Ovary (tissue), 10 donors: ENCODE measurements at regions of chr21 and their contacts with region 1.

Region 1: DNA sequence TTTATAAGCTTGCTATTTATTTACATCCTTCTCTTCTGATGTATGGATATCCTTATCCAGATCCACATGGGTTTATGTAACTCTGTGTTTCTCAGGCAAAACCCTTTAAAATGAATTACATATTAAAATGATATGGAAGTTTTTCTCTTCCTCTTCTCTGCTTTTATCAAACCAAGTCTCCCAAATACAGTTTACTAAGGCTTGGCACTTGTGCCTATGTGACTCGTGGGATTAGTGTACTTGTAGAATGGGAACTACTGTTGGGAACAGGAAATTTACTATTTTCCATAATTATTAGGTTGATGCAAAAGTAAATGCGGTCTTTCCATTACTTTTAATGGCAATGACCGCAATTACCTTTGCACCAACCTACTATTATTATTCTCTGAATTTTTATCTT is 14.8 kb downstream of the SIM2 start:
- DNase-seq: no peak
- H3K4me3 ChIP-seq: no peak overlapping the region
- H3K27ac ChIP-seq: no peak overlapping the region
- H3K4me1 ChIP-seq: no peaks in the 10 kb centered on the region
- H3K27me3 ChIP-seq: peaks cover 3% of the 10 kb centered on the region
- CTCF ChIP-seq: no peak
- EP300 ChIP-seq: no peak
- POLR2A ChIP-seq: no peak

Region 2: GRCh38 chr21:36695671-36696389 is 17.9 kb before region 1 on chr21:
- intact Hi-C with region 1: loop called in 1 of 4 experiments (anchors 2 kb)
- DNase-seq: no peak
- H3K4me3 ChIP-seq: no peak overlapping the region
- H3K27ac ChIP-seq: no peak overlapping the region
- H3K4me1 ChIP-seq: peaks cover 2% of the 10 kb centered on the region
- H3K27me3 ChIP-seq: peaks cover 2% of the 10 kb centered on the region
- CTCF ChIP-seq: no peak
- EP300 ChIP-seq: no peak
- POLR2A ChIP-seq: no peak